T-cell (primary cell): ENCODE measurements at regions of chr11 and their contacts with region 1.

Region 1: DNA sequence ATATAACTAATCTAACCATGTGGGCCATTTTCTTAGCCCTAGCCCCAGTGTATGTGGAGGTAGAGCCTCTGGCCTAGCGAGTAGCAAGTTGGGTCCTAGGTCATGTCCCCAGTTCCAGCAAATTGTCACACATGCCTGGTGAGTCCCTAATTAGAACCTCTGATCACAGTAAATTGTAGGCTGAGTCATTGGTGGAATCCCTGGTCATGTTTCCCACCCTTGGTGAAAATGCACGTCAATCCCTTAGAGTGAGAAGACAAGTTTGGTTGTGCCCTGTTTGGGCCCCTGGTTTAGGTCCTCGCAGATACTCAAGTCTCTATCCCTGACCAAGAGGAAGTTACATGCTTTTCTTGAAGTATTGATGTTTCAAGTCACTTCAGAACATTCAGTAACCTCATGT is 46.7 kb downstream of the ATM start:
- DNase-seq: no peak
- ATAC-seq: no peak
- H3K4me3 ChIP-seq: no peak overlapping the region
- H3K4me3 Mint-ChIP-seq: no peak overlapping the region
- H3K27ac ChIP-seq: no peak overlapping the region
- H3K27ac Mint-ChIP-seq: peak overlapping the region; percentile 39 to 51
- H3K4me1 ChIP-seq: no peaks in the 10 kb centered on the region
- H3K4me1 Mint-ChIP-seq: peaks cover 28 to 34% (median 31%) of the 10 kb centered on the region in 3 donors
- H3K27me3 ChIP-seq: no peaks in the 10 kb centered on the region
- H3K27me3 Mint-ChIP-seq: no peaks in the 10 kb centered on the region

Region 2: DNA sequence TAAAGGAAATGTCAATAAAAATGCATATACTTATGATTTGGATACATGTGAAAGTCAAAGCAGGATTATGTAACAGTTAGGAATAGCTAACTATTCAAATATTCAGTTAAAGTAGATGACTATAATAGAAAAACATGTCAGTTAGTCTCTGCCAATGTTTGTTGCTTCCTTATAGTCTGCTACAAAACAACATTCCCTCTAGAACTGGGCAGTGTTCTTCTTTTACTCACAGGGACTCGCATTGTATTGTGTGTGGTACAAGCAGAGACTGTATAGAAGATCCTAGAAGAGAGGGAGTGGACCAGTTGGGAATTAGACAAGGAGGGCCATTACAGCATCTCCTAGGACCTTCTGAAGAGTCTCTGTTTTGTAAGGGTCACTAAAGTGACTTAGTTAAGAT is 137.6 kb before region 1 on chr11:
- CTCF ChIA-PET with region 1: no interaction called
- POLR2A ChIA-PET with region 1: interaction called in 1 of 2 experiments, 12 read pairs
- DNase-seq: no peak
- ATAC-seq: no peak
- H3K4me3 ChIP-seq: no peak overlapping the region
- H3K4me3 Mint-ChIP-seq: no peak overlapping the region
- H3K27ac ChIP-seq: no peak overlapping the region
- H3K27ac Mint-ChIP-seq: peak overlapping the region; percentile 45 to 61
- H3K4me1 ChIP-seq: no peaks in the 10 kb centered on the region
- H3K4me1 Mint-ChIP-seq: peaks cover 4 to 18% (median 15%) of the 10 kb centered on the region in 3 donors
- H3K27me3 ChIP-seq: no peaks in the 10 kb centered on the region
- H3K27me3 Mint-ChIP-seq: no peaks in the 10 kb centered on the region